Colonic mucosa (tissue), 4 donors: ENCODE measurements at regions of chrX and their contacts with region 1.

Region 1: DNA sequence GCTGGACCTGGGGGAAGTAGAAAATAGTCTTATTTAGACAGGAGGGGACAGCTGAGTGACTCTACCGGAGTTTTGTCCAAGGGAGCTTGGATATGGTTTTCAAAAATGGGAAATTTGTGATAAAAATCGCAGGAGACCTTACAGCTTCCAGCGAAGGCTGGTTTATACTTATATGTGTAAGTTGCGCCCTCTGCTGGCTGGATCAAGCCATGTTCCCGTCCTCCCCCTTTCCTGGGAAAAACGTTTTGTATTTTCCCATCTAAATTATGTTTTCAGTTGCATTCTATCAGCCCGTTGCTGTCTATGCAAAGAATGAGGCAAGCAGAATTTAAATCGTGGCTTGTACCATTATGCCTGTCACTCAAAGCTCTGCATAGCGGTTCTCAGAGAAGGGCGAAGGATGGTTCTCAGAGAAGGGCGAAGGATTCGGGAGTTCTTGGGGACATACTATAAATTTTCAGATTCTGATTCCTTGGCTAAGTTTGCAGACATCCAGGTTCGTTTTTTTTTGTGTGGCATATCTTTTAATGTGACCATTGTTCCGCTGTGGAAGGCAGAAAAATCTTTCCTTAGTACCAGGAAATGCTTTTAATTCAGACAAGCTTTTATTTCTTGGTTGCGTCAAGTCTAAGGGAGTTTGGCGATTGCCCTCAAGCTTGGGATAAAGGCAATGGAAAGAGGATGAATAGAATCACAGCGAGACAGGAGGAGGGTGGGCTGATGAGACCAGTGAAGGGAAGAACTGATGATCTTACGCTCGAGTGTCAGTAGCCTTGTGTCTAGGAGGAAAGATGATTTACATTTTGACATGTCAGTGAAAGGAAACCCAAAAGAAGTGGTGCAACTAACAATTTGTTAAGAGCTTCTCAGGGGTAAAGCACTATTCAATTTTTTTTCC is 128.5 kb upstream of the ARX start:
- DNase-seq: peak; percentile 60
- H3K4me3 ChIP-seq: no peak overlapping the region
- H3K27ac ChIP-seq: no peak overlapping the region
- H3K4me1 ChIP-seq: no peaks in the 10 kb centered on the region
- H3K27me3 ChIP-seq: no peaks in the 10 kb centered on the region
- CTCF ChIP-seq: peak; percentile 83

Region 2: DNA sequence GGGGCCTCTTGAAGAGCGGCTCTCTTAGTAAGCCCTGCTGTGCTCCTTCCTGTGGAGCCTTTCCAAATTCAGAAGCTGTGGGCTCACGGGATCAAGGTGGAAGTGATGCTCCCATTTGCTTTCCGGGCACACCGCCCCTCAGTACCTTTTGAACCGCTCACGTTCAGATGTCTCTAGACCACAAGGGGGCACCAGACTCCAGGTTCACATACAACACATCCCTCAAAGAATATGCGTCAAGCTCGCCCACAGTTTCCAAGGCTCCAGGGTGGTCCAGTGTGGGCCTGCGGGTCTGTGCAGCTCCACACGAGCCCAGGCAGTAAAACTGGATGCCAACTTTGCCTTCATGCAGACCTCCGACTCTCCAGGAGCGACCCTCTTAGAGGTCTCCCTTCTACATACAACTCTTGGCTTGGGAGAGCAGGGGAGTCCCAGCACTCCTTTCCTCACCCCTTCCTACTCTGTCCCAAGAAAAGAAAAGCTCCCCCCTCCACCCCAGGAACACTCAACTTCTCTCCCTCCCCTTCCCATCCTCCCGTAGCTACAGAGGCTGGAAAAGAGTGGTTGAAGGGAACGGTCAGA is 772.8 kb before region 1 on chrX:
- intact Hi-C with region 1: loop called (anchors 5 kb)
- DNase-seq: peak; percentile 70
- H3K4me3 ChIP-seq: no peak overlapping the region
- H3K27ac ChIP-seq: no peak overlapping the region
- H3K4me1 ChIP-seq: no peaks in the 10 kb centered on the region
- H3K27me3 ChIP-seq: no peaks in the 10 kb centered on the region
- CTCF ChIP-seq: peak; percentile 62

Region 3: DNA sequence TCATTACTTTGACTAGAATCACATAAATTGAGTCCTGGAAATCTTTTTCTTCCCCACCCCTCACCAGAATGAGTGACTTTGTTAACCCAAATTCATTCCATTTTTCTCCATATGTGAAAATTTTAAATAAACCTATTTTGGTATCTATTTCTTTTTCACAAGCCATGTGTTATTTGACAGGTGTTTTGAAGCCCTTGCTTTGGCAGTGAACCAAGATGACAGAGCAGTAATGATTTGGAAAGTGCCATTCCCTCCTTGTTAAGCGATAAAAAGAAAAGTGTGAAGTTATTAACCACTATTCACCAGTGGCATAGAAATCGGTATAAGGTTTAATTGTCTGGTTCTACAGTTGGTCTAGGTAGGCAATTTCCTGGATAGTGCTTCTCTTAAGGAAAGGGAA is 384.5 kb before region 1 on chrX:
- intact Hi-C with region 1: loop called (anchors 5 kb)
- DNase-seq: no peak
- H3K4me3 ChIP-seq: no peak overlapping the region
- H3K27ac ChIP-seq: no peak overlapping the region
- H3K4me1 ChIP-seq: no peaks in the 10 kb centered on the region
- H3K27me3 ChIP-seq: no peaks in the 10 kb centered on the region
- CTCF ChIP-seq: no peak

Region 4: DNA sequence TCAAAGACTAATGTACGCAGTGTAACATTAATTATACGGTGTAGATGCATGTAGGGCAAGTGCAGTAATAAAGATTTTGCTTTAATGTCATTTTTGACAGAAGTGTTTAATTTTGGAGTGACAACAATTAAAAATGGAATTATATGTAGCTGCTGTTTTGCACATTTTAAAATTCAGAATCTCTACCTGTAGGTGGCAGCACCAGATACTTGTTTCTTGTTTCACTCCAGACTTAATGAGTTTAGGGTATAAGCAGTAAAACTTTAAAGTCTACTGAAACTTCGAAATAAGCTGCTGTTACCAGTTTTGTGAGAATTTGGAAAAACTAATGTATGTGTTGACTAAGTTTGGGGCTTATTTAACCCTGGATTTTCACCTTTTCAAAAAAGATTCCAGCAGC is 305.7 kb before region 1 on chrX:
- intact Hi-C with region 1: loop called (anchors 5 kb)
- DNase-seq: peak; percentile 21
- H3K4me3 ChIP-seq: no peak overlapping the region
- H3K27ac ChIP-seq: no peak overlapping the region
- H3K4me1 ChIP-seq: no peaks in the 10 kb centered on the region
- H3K27me3 ChIP-seq: no peaks in the 10 kb centered on the region
- CTCF ChIP-seq: peak; percentile 47

Region 5: GRCh38 chrX:25356456-25356855 is 212.2 kb after region 1 on chrX:
- intact Hi-C with region 1: no loop called
- DNase-seq: no peak
- H3K4me3 ChIP-seq: no peak overlapping the region
- H3K27ac ChIP-seq: no peak overlapping the region
- H3K4me1 ChIP-seq: no peaks in the 10 kb centered on the region
- H3K27me3 ChIP-seq: no peaks in the 10 kb centered on the region
- CTCF ChIP-seq: no peak